AG04449 (cell line): ENCODE measurements at regions of chr5 and their contacts with region 1.

Region 1: DNA sequence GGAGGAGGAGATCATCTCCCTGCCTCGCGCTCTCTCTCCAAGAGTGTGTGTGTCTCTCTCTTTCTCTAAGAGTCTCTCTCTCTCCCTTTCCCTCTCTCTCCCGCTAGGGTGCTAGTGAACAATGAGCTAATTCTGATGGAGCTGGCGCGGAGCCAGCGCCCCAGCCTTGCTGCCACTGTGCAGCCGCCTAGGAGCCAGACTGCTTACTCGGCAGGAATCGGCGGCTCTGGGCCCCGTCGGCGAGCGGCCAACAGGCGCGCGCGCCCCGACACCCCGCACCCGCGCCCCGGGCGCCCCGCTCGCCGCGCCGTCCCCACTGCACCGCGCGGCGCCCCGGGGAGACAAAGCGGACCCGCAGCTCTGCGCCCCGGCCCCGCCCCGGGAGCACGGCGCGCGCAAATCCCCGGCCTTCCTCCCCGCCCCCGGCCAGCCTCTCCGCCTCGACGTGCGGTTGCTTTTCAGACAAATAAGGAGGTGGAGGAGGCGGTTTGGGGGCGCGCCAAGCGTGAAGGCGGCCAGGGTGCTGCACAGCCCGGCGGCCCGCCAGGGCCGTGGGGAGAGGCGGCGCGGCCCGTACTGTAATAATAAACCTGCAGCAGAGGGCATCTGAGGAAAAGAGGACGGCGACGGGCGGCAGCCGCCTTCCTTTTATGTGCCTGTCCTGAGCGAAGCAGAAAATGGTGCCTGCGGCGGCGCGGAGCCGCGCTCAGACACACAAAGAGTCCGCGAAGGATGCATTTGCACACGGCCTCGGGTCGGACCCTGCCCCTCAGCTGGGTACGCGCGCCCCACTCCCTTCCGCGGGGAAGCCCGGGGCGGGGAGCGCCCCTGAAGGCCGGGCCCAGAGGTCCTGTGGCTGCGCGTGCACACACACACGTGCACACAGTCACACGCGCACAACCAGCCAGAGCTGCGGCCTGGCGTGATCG is 625 bp upstream of the NREP start:
- DNase-seq: peak; percentile 91
- H3K4me3 ChIP-seq: peak overlapping the region; percentile 74
- CTCF ChIP-seq: peak; percentile 71

Region 2: GRCh38 chr5:111735583-111736270 is 21.9 kb before region 1 on chr5:
- CTCF ChIA-PET with region 1: interaction called, 4 read pairs
- POLR2A ChIA-PET with region 1: interaction called, 16 read pairs
- DNase-seq: no peak
- H3K4me3 ChIP-seq: no peak overlapping the region
- CTCF ChIP-seq: no peak

Region 3: DNA sequence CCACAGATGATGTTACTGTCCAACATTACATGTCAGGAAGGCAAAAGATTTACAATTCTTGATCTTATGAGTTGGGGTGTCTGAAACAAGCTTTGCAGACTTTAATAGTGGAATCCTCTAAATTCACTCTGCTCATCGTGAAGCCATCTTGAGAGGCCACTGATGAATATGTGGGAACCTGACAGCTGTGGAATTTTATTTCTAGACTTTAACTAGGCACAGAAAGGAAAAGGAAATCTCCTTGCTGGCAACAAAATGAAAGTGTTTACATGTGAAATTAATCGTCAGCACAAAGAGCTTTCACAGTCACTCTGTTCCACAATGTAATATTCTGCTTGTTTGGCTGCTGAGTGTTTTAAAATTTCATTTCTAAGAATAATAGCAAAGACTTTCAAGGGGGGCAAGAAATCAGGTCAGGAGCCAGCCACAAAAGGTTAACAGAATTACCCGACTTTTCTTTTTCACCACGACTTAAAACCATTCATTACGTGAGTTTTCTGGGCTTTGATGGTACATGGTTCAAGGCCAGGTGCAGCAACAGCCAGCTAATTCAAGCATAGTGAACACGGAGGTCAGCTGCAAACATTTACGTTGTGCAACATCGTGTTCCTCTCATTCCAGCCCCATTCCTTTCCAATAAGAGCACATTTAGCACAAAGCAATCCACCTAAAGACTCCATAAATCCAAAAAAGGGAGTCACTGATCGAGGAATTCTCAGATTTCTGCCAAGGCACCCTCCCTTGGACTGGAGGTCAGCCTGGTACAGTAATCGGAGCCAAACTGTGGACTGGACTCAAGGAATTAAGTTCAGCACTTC is 15.2 kb before region 1 on chr5:
- CTCF ChIA-PET with region 1: interaction called, 4 read pairs
- POLR2A ChIA-PET with region 1: interaction called, 14 read pairs
- DNase-seq: peak; percentile 83
- H3K4me3 ChIP-seq: no peak overlapping the region
- CTCF ChIP-seq: no peak

Region 4: GRCh38 chr5:111929867-111930266 is 172.2 kb after region 1 on chr5:
- CTCF ChIA-PET with region 1: no interaction called
- POLR2A ChIA-PET with region 1: interaction called, 17 read pairs
- DNase-seq: no peak
- H3K4me3 ChIP-seq: no peak overlapping the region
- CTCF ChIP-seq: no peak

Region 5: DNA sequence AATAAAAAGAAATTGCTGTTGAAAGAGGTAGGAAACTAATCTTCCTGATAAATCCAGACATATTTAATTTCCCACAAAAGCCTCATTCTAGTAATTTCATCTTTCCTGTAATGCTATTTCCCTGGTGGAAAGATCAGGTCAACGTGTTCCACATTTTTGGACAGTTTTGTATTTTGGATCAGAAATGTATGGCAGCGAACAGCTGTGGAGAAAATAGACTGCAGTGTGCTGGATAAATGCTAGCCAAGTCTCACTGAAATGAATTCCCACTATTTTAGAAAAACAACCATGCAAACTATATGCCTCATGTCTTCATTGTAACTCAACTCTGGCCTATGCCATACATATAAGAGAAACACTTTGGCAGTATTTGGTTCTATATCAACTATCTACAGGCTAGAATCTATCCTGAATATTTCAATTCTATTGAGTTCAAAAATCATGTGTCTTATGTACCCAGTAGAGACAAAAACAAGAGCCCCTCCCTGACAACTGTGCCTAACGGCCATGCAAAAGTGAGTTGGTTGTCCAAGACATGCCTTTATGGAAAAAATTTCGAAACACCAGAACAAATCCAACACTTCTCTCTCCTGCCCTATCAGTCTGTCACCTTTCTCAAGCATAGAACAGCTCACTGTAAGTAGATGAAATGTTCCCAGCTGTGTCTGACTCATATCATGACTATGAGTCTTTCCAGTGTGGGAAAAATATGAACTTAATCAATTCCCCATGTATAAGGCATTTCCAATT is 190.6 kb after region 1 on chr5:
- CTCF ChIA-PET with region 1: interaction called, 3 read pairs
- POLR2A ChIA-PET with region 1: interaction called, 12 read pairs
- DNase-seq: peak; percentile 95
- H3K4me3 ChIP-seq: no peak overlapping the region
- CTCF ChIP-seq: no peak

Region 6: GRCh38 chr5:111997711-111998110 is 240.1 kb after region 1 on chr5:
- CTCF ChIA-PET with region 1: interaction called, 3 read pairs
- POLR2A ChIA-PET with region 1: interaction called, 18 read pairs
- DNase-seq: peak; percentile 100
- H3K4me3 ChIP-seq: no peak overlapping the region
- CTCF ChIP-seq: no peak